Adrenal gland (tissue), 19 donors: ENCODE measurements at regions of chr12 and their contacts with region 1.

Region 1: DNA sequence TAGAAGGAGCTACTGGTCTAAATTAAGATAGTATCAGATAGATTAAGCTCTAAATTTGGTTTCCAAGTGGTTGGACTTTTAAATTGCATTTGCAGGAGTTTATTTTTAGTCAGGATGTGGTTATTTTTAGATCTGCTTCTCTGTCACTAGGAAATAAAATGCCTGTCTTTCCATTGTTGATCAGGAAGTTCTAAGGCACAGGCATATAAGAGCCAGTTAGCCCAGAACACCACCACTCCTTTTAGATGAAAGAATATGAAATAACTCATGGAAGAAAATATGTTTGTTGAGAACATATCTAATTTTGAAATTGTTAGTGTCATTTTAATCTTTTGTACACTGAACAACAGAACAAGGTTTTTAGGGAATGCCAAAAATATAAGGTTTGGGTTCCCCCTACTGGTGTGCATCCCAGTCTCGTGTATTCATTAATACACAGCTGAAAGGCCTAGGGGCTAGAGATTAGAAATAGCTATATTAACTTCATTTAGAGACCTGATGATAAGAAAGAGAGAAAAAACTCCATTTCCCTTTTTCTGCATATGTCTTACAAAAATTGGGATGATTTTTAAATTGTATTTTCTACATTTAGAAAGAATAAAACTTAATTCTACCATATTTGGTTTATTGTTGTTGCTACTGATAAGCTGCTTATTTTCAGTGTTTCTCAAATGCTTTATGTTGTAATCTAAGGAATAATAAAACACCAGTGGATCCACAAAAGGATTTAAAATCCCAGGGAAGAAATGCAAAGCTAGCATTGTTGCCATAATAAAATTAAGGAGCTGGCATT is 67.2 kb downstream of the RIC8B start:
- DNase-seq: peak; percentile 40 to 72 (median 50)
- H3K4me3 ChIP-seq: peak overlapping the region in 1 of 4 donors; percentile 4
- H3K27ac ChIP-seq: no peak overlapping the region
- H3K4me1 ChIP-seq: peaks cover 5 to 30% of the 10 kb centered on the region in 2 donors
- H3K27me3 ChIP-seq: no peaks in the 10 kb centered on the region
- CTCF ChIP-seq: peak; percentile 30 to 75 (median 64)
- POLR2A ChIP-seq: no peak

Region 2: GRCh38 chr12:106386813-106387535 is 454.7 kb before region 1 on chr12:
- intact Hi-C with region 1: loop called in 1 of 2 experiments (anchors 10 kb)
- DNase-seq: no peak
- H3K4me3 ChIP-seq: no peak overlapping the region
- H3K27ac ChIP-seq: no peak overlapping the region
- H3K4me1 ChIP-seq: peaks cover 0 to under 1% of the 10 kb centered on the region in 2 donors
- H3K27me3 ChIP-seq: no peaks in the 10 kb centered on the region
- CTCF ChIP-seq: no peak
- POLR2A ChIP-seq: no peak